WTC11 (cell line): ENCODE measurements at regions of chr19 and their contacts with region 1.

Region 1: DNA sequence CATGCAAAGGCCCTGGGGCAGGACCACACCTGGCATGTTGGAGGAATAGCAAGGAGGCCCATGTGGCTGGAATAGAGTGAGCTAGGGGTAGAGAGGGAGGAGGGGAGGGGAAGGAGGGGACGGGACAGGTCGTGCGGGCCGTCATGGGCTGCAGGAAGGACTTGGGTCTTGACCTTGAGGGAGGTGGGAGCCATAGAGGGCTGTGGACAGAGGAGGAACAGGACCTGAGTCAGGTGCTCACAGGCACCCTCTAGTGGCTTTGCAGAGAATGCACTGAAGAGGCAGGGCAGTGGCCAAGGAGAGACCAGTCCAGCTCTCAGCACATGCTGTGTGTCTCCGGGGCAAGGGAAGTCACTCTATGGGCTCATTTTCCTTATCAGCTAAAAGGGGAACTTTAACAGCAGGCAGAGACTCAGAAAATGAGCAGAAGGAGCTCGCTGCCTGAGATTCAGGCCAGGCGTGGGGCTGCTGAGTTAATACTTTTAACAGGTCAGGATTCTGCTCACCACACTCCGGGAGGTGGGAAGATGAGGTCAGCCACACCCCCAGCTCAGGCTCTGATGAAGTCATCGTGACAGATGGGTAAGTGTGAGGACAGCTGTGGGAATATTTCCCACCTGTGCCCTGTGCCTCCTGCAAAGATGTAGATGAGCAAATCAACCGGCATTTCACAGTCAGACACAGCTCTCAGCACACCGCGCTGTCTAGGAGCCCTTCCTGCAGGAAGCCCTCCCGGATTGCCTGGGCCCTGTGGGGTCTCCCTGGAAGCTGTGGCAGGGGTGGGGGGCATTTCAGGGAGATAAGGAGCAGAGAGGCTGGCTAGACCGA is 6.0 kb upstream of the TNFAIP8L1 start:
- DNase-seq: peak; percentile 80
- ATAC-seq: peak; percentile 68
- H3K4me3 Mint-ChIP-seq: 0 out of 2 replicates have a peak overlapping the region, but pooled peaks have one; percentile 8
- H3K27ac Mint-ChIP-seq: no peak overlapping the region
- H3K4me1 Mint-ChIP-seq: peaks cover 6% of the 10 kb centered on the region
- H3K27me3 Mint-ChIP-seq: peaks cover 48% of the 10 kb centered on the region
- CTCF ChIP-seq: peak; percentile 90

Region 2: GRCh38 chr19:4534836-4535658 is 98.3 kb before region 1 on chr19 and contains the start of gene PLIN5:
- CTCF ChIA-PET with region 1: interaction called, 33 read pairs
- POLR2A ChIA-PET with region 1: no interaction called
- DNase-seq: peak; percentile 97
- ATAC-seq: peak; percentile 93
- H3K4me3 Mint-ChIP-seq: peak within 1 kb of the TSS; percentile 53
- H3K27ac Mint-ChIP-seq: no peak within 1 kb of the TSS
- H3K4me1 Mint-ChIP-seq: peaks cover 3% of the 10 kb centered on the region; the same call in 1 of the 2 replicates
- H3K27me3 Mint-ChIP-seq: peaks cover 60% of the 10 kb centered on the region
- CTCF ChIP-seq: no peak
- total RNA-seq, gene PLIN5: 3.3 to 4.2 TPM (median 3.9 TPM) in 3 replicates

Region 3: DNA sequence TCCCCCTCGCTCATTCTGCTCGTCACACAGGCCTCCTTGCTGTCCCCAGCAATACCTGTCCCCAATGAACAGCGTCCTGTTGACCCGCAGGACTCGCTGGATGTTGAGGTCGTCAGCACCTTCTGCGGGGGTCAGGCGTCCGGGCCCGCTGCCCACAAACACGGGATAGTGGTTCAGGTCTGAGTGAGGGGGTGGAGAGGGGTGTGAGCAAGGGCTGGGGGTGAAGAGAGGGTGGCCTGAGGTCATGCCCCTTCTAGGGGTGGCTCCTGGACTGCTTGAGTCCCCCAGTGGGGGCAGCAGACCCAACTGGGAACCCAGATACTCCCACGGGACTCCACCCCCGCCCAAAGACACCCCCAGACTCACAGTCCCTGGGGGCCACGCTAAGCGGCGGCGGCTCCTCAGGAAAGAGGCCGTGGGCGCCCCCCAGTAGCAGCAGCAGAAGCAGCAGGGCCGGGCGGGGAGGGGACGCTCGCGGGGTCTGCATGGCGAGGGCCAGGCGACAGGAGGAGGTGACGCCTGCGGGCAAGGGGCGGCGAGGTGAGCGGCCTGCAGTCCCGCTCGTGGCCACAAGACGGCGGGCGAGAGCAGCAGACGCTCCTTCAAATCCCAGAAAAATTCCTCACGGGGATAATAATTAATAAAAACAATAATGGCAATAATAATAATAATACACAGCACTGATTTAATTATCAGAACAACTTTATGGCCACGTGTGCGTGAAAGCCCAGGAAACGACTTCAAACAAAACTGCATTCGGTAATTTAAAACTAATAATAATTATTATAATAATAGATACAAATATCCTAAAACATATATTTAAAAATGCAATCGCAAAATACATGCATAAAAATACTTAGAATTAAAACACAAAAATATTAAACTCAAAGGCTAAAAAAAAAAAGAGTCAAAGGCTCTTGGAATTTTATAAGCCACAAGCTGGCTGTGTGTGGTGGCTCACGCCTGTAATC is 75.1 kb before region 1 on chr19:
- CTCF ChIA-PET with region 1: interaction called, 28 read pairs
- POLR2A ChIA-PET with region 1: no interaction called
- DNase-seq: peak; percentile 78
- ATAC-seq: peak; percentile 12; the same call in 1 of the 2 replicates
- H3K4me3 Mint-ChIP-seq: no peak overlapping the region
- H3K27ac Mint-ChIP-seq: no peak overlapping the region
- H3K4me1 Mint-ChIP-seq: peaks cover 9% of the 10 kb centered on the region
- H3K27me3 Mint-ChIP-seq: peaks cover 2% of the 10 kb centered on the region; the same call in 1 of the 2 replicates
- CTCF ChIP-seq: peak; percentile 100

Region 4: GRCh38 chr19:4597975-4598671 is 35.2 kb before region 1 on chr19:
- CTCF ChIA-PET with region 1: interaction called, 35 read pairs
- POLR2A ChIA-PET with region 1: no interaction called
- DNase-seq: peak; percentile 88
- ATAC-seq: peak; percentile 74
- H3K4me3 Mint-ChIP-seq: peak overlapping the region; percentile 80
- H3K27ac Mint-ChIP-seq: no peak overlapping the region
- H3K4me1 Mint-ChIP-seq: peaks cover 10% of the 10 kb centered on the region
- H3K27me3 Mint-ChIP-seq: peaks cover 67% of the 10 kb centered on the region
- CTCF ChIP-seq: no peak

Region 5: GRCh38 chr19:4676955-4677731 is 43.8 kb after region 1 on chr19:
- CTCF ChIA-PET with region 1: interaction called, 12 read pairs
- POLR2A ChIA-PET with region 1: no interaction called
- DNase-seq: peak; percentile 87
- ATAC-seq: peak; percentile 48
- H3K4me3 Mint-ChIP-seq: no peak overlapping the region
- H3K27ac Mint-ChIP-seq: peak overlapping the region; percentile 30; the same call in 1 of the 2 replicates
- H3K4me1 Mint-ChIP-seq: peaks cover 12% of the 10 kb centered on the region
- H3K27me3 Mint-ChIP-seq: no peaks in the 10 kb centered on the region
- CTCF ChIP-seq: peak; percentile 78